OCI-LY7 (cell line): ENCODE measurements at regions of chr9 and their contacts with region 1.

Region 1: GRCh38 chr9:136512651-136513071 is 29.8 kb upstream of the SEC16A start:
- DNase-seq: peak; percentile 33
- H3K4me3 ChIP-seq: no peak overlapping the region
- H3K27ac ChIP-seq: no peak overlapping the region
- H3K4me1 ChIP-seq: no peaks in the 10 kb centered on the region
- CTCF ChIP-seq: no peak

Region 2: DNA sequence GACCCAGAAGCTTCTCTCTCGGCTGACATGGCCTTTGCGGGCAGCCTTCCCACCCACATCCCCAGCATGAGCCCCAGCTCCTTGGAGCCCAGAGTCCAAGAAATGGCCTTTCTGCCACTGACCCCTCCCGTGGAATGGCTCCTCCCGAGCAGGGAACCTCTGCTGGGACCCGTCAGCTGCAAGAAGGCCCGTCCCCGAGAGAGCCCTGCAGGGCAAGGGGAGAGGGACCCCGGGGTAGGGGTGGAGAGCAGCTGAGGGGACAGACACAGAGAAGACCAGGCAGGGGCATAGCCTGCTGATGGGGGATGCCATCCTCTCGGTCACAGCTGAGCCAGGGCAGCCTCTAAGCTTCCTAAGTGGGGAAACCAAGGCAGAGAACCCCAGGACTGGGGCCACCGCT is 44.4 kb after region 1 on chr9:
- CTCF ChIA-PET with region 1: no interaction called
- POLR2A ChIA-PET with region 1: no interaction called
- intact Hi-C with region 1: loop called (anchors 1 kb)
- DNase-seq: no peak
- H3K4me3 ChIP-seq: no peak overlapping the region
- H3K27ac ChIP-seq: no peak overlapping the region
- H3K4me1 ChIP-seq: peaks cover 6% of the 10 kb centered on the region
- CTCF ChIP-seq: no peak